ENCODE measurements at regions of chr5 and their contacts with region 1.

Region 1: GRCh38 chr5:55232985-55233928 is at the start of gene CCNO:
- DNase-seq: peak in 40 of 42 donors; percentile 31 to 92 (median 76)

Region 2: GRCh38 chr5:55307383-55308253 is 74.4 kb after region 1 on chr5 and contains the starts of genes DHX29 and MTREX:
- intact Hi-C with region 1: loop called (anchors 5 kb)
- DNase-seq: peak; percentile 88 to 97 (median 94)